Endothelial cell of umbilical vein (primary cell): ENCODE measurements at regions of chr5 and their contacts with region 1.

Region 1: GRCh38 chr5:138503487-138504270 is 38.4 kb downstream of the EGR1 start:
- DNase-seq: peak; percentile 66
- H3K4me3 ChIP-seq: no peak overlapping the region
- H3K27ac ChIP-seq: no peak overlapping the region
- H3K4me1 ChIP-seq: no peaks in the 10 kb centered on the region
- H3K27me3 ChIP-seq: no peaks in the 10 kb centered on the region
- CTCF ChIP-seq: peak; percentile 71 to 83
- POLR2A ChIP-seq: no peak

Region 2: GRCh38 chr5:137847687-137848086 is 656.0 kb before region 1 on chr5:
- CTCF ChIA-PET with region 1: no interaction called
- POLR2A ChIA-PET with region 1: no interaction called
- dilution Hi-C with region 1: no loop called
- intact Hi-C with region 1: no loop called
- DNase-seq: no peak
- H3K4me3 ChIP-seq: no peak overlapping the region
- H3K27ac ChIP-seq: no peak overlapping the region
- H3K4me1 ChIP-seq: peaks cover 3% of the 10 kb centered on the region
- H3K27me3 ChIP-seq: peaks cover 0 to 5% of the 10 kb centered on the region in 2 experiments
- CTCF ChIP-seq: no peak
- POLR2A ChIP-seq: no peak

Region 3: GRCh38 chr5:138178516-138179276 is 325.0 kb before region 1 on chr5 and contains the starts of genes BRD8 and KIF20A:
- CTCF ChIA-PET with region 1: interaction called, 10 read pairs
- POLR2A ChIA-PET with region 1: no interaction called
- dilution Hi-C with region 1: no loop called
- intact Hi-C with region 1: loop called (anchors 1 kb)
- DNase-seq: peak; percentile 98
- H3K4me3 ChIP-seq: peak within 1 kb of the TSS; percentile 71 to 95 (median 87)
- H3K27ac ChIP-seq: peak within 1 kb of the TSS; percentile 68
- H3K4me1 ChIP-seq: peaks cover 22% of the 10 kb centered on the region
- H3K27me3 ChIP-seq: no peaks in the 10 kb centered on the region
- CTCF ChIP-seq: no peak
- POLR2A ChIP-seq: peak; percentile 69
- total RNA-seq, gene BRD8: 69.7 and 73.7 TPM in 2 replicates
- total RNA-seq, gene KIF20A: 72.0 and 78.1 TPM in 2 replicates

Region 4: DNA sequence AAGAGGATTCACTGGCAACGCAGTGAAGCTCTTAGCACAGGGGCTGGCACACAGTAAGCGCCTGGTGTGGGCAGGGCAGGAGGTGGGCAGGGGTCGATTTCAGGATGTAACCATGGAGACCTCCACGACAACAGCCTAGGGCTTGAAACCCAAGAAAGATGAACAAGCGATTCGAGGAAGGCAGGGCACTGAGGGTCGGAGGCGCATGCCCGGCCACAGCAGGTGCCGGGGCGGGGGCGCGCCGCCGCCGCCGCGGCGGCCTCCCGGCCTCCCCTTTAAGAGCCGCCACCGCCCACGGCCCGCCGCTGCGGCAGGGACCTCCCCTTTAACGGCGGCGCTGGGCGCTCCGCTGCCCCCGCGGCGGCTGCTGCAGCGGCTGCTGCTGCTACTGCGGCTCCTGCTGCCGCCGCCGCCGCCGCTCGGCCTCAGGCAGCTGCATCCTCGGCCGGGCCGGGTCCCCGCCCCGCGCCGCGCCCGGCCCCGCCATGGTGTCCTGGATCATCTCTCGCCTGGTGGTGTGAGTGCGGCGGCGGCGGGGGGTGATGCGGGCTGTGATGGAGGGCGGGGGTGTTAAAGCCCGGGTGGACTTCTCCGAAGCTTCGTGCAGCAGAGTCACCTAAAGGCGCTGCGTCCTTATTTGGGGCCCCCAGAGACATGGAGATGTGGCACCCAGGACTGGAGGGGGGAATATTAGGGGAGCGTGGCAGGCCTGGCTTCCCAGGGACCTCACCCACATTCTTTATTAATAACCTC is 64.8 kb before region 1 on chr5 and contains the start of gene REEP2:
- CTCF ChIA-PET with region 1: interaction called, 207 read pairs
- POLR2A ChIA-PET with region 1: no interaction called
- dilution Hi-C with region 1: no loop called
- intact Hi-C with region 1: no loop called
- DNase-seq: peak; percentile 42
- H3K4me3 ChIP-seq: peak within 1 kb of the TSS; percentile 50 to 80 (median 54)
- H3K27ac ChIP-seq: no peak within 1 kb of the TSS
- H3K4me1 ChIP-seq: peaks cover 9% of the 10 kb centered on the region
- H3K27me3 ChIP-seq: no peaks in the 10 kb centered on the region
- CTCF ChIP-seq: no peak
- POLR2A ChIP-seq: no peak
- total RNA-seq, gene REEP2: 4.0 and 4.4 TPM in 2 replicates

Region 5: GRCh38 chr5:138464008-138464387 is 39.7 kb before region 1 on chr5:
- CTCF ChIA-PET with region 1: interaction called, 70 read pairs
- POLR2A ChIA-PET with region 1: interaction called, 5 read pairs
- dilution Hi-C with region 1: no loop called
- intact Hi-C with region 1: loop called (anchors 1 kb)
- DNase-seq: peak; percentile 96
- H3K4me3 ChIP-seq: peak overlapping the region; percentile 62 to 84 (median 69)
- H3K27ac ChIP-seq: peak overlapping the region; percentile 90
- H3K4me1 ChIP-seq: peaks cover 16% of the 10 kb centered on the region
- H3K27me3 ChIP-seq: no peaks in the 10 kb centered on the region
- CTCF ChIP-seq: peak; percentile 85 to 96
- POLR2A ChIP-seq: peak; percentile 68

Region 6: GRCh38 chr5:138515556-138516245 is 12.0 kb after region 1 on chr5:
- CTCF ChIA-PET with region 1: interaction called, 38 read pairs
- POLR2A ChIA-PET with region 1: no interaction called
- dilution Hi-C with region 1: no loop called
- intact Hi-C with region 1: no loop called
- DNase-seq: no peak
- H3K4me3 ChIP-seq: no peak overlapping the region
- H3K27ac ChIP-seq: no peak overlapping the region
- H3K4me1 ChIP-seq: no peaks in the 10 kb centered on the region
- H3K27me3 ChIP-seq: no peaks in the 10 kb centered on the region
- CTCF ChIP-seq: no peak
- POLR2A ChIP-seq: no peak